ENCODE measurements at regions of chr6 and their contacts with region 1.

Region 1: GRCh38 chr6:53718597-53719460 is 53.3 kb upstream of the KLHL31 start:
- DNase-seq: peak; percentile 80
- H3K4me3 Mint-ChIP-seq: no peak overlapping the region
- H3K27ac Mint-ChIP-seq: peak overlapping the region; percentile 85
- H3K4me1 Mint-ChIP-seq: peaks cover 5% of the 10 kb centered on the region
- H3K27me3 Mint-ChIP-seq: no peaks in the 10 kb centered on the region
- CTCF ChIP-seq: peak; percentile 75

Region 2: DNA sequence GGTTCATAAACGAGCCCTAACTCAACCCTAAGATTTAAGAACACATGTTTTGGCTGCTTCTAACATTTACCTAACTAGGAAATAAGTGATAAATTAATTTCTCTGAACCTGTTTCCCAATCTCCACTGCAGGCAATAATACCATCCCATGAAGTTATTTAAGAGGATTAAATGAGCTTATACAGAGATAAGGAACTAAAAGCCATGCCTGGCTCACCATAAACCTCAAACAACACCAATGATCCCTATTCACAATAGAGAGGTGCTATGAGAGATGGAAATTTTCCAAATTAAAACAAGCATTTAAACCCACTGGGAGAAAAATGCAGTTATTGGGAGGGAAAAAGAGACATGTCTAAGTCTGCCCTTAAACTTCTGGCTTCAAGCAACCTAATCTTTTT is 19.4 kb before region 1 on chr6:
- CTCF ChIA-PET with region 1: interaction called, 19 read pairs
- POLR2A ChIA-PET with region 1: interaction called, 5 read pairs
- intact Hi-C with region 1: no loop called
- DNase-seq: no peak
- H3K4me3 Mint-ChIP-seq: no peak overlapping the region
- H3K27ac Mint-ChIP-seq: no peak overlapping the region
- H3K4me1 Mint-ChIP-seq: no peaks in the 10 kb centered on the region
- H3K27me3 Mint-ChIP-seq: no peaks in the 10 kb centered on the region
- CTCF ChIP-seq: no peak

Region 3: GRCh38 chr6:53707108-53707897 is 11.5 kb before region 1 on chr6:
- CTCF ChIA-PET with region 1: interaction called, 19 read pairs
- POLR2A ChIA-PET with region 1: interaction called, 3 read pairs
- intact Hi-C with region 1: no loop called
- DNase-seq: no peak
- H3K4me3 Mint-ChIP-seq: no peak overlapping the region
- H3K27ac Mint-ChIP-seq: no peak overlapping the region
- H3K4me1 Mint-ChIP-seq: no peaks in the 10 kb centered on the region
- H3K27me3 Mint-ChIP-seq: no peaks in the 10 kb centered on the region
- CTCF ChIP-seq: no peak

Region 4: GRCh38 chr6:53734473-53735299 is 15.9 kb after region 1 on chr6:
- CTCF ChIA-PET with region 1: interaction called, 78 read pairs
- POLR2A ChIA-PET with region 1: interaction called, 4 read pairs
- intact Hi-C with region 1: no loop called
- DNase-seq: peak; percentile 92
- H3K4me3 Mint-ChIP-seq: peak overlapping the region; percentile 44
- H3K27ac Mint-ChIP-seq: peak overlapping the region; percentile 83
- H3K4me1 Mint-ChIP-seq: peaks cover 36% of the 10 kb centered on the region
- H3K27me3 Mint-ChIP-seq: no peaks in the 10 kb centered on the region
- CTCF ChIP-seq: peak; percentile 35

Region 5: GRCh38 chr6:53956068-53956711 is 237.4 kb after region 1 on chr6:
- CTCF ChIA-PET with region 1: interaction called, 68 read pairs
- POLR2A ChIA-PET with region 1: interaction called, 9 read pairs
- intact Hi-C with region 1: loop called (anchors 1 kb)
- DNase-seq: peak; percentile 70
- H3K4me3 Mint-ChIP-seq: no peak overlapping the region
- H3K27ac Mint-ChIP-seq: no peak overlapping the region
- H3K4me1 Mint-ChIP-seq: no peaks in the 10 kb centered on the region
- H3K27me3 Mint-ChIP-seq: no peaks in the 10 kb centered on the region
- CTCF ChIP-seq: peak; percentile 67

Region 6: GRCh38 chr6:53979468-53980067 is 260.7 kb after region 1 on chr6:
- CTCF ChIA-PET with region 1: interaction called, 4 read pairs
- POLR2A ChIA-PET with region 1: no interaction called
- intact Hi-C with region 1: loop called (anchors 1 kb)
- DNase-seq: peak; percentile 58
- H3K4me3 Mint-ChIP-seq: no peak overlapping the region
- H3K27ac Mint-ChIP-seq: no peak overlapping the region
- H3K4me1 Mint-ChIP-seq: peaks cover 17% of the 10 kb centered on the region
- H3K27me3 Mint-ChIP-seq: no peaks in the 10 kb centered on the region
- CTCF ChIP-seq: peak; percentile 72

Measured in MCF 10A (cell line).